Activated CD4-positive, alpha-beta memory T cell treated with anti-CD3 and anti-CD28 coated beads for 36 hours (primary cell): ENCODE measurements at regions of chr3 and their contacts with region 1.

Region 1: DNA sequence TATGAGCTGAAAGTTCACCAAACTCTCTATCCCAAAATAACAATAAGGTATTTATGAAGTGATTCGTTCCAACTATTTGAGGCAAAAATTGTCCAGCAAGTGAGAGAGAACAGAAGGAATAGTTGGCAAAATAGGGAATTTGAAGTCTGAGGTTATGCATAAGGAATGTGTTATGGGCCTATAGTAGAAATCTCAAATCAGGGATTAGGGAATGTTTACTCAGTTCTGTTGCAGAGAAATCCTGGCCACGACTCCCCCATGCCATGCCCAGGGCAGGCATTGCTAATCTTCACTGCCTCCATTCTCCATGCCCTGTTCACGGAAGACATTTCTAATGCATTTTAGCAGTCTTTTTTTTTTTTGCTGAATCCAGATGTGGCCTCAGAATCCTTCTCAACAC is 58.6 kb downstream of the FLNB start:
- DNase-seq: no peak
- H3K4me3 Mint-ChIP-seq: no peak overlapping the region
- H3K27ac Mint-ChIP-seq: no peak overlapping the region
- H3K4me1 Mint-ChIP-seq: peaks cover 10% of the 10 kb centered on the region
- H3K27me3 Mint-ChIP-seq: no peaks in the 10 kb centered on the region

Region 2: DNA sequence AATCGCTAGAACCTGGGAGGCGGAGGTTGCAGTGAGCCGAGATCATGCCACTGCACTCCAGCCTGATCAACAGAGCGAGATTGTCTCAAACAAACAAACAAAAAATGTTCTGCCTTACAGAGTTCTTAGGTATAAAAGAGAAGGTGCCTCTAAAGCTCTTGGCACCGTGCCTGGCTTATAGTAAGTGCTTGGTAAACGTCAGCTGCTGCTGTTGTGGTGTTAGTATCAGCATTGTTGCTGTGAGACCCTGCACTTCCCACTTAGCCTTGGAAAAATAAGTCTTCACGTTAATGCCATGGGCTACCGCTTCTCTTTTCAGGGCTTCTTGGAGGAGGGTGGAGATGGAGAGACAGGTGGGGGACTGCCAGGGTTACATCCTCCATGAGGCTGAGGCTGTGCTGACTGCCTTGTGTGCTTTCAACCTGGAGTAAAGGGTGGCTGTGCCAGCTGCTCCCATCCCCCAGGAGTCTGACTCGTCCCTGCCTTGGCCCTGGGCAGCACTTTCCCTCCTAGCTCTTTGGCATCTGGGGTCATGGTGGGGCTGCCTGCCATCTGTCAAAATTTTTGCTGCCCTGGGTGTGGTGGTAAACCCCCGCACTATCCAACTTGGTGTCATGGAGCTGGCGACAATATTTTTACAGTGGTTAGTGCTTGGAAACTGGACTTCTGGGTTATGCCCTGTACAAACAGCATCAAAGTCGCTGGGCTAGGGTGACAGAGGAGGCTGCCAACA is 40.8 kb before region 1 on chr3:
- CTCF ChIA-PET with region 1: no interaction called
- POLR2A ChIA-PET with region 1: no interaction called
- intact Hi-C with region 1: loop called (anchors 5 kb)
- DNase-seq: no peak
- H3K4me3 Mint-ChIP-seq: no peak overlapping the region
- H3K27ac Mint-ChIP-seq: no peak overlapping the region
- H3K4me1 Mint-ChIP-seq: peaks cover 47% of the 10 kb centered on the region
- H3K27me3 Mint-ChIP-seq: no peaks in the 10 kb centered on the region